Pancreas (tissue), 10 donors: ENCODE measurements at regions of chr7 and their contacts with region 1.

Region 1: GRCh38 chr7:2214636-2215035 is 18.1 kb downstream of the MAD1L1 start:
- DNase-seq: peak in 1 of 6 donors; percentile 11
- ATAC-seq: no peak
- H3K4me3 ChIP-seq: no peak overlapping the region
- H3K27ac ChIP-seq: no peak overlapping the region
- H3K4me1 ChIP-seq: no peaks in the 10 kb centered on the region
- H3K27me3 ChIP-seq: no peaks in the 10 kb centered on the region
- CTCF ChIP-seq: no peak

Region 2: DNA sequence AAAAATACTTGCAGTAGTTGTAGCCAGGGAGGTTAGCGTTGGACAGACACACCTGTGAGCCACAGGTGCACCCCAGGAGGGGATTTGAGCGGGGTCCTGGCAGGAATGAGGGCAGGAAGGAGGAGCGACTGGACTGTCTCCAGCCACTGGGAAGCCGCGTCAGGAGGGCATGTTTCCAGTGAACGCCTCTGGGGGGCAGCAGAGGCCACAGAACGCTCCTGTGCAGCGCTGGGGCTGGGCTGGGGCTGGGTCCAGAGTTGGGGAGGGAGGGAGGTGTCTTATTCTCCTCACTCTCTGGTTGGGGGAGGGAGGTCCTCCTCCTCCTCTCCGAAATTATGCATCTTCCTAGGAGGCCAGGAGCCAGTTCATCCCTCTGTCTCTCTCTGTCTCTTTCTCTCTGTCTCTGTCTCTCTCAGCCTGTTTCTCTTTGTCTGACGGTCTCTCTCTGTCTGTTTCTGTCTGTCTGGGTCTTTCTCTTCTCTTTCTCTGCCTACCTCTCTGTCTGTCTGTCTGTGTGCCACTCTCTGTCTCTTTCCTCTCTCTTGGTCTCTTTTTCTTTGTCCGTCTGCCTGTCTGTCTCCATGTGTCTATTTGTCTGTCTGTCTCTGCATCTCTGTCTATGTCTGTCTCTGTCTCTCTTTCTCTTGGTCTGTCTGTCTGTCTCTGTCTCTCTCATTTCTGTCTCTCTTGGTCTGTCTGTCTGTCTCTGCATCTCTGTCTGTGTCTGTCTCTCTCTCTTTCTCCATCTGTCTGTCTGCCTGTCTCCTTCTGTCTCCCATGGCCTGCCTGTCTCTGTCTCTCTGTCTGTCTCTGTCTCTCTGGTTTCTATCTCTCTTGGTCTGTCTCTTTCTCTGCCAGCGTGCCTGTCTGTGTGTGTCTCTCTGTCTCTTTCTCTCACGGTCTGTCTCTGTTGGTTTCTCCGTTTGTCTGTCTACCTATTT is 634.9 kb before region 1 on chr7:
- intact Hi-C with region 1: loop called in 1 of 3 experiments (anchors 10 kb)
- DNase-seq: peak in 5 of 6 donors; percentile 42 to 88 (median 74)
- ATAC-seq: peak; percentile 88 to 99 (median 96)
- H3K4me3 ChIP-seq: no peak overlapping the region
- H3K27ac ChIP-seq: no peak overlapping the region
- H3K4me1 ChIP-seq: peaks cover 0 to 3% (median 0%) of the 10 kb centered on the region in 3 donors
- H3K27me3 ChIP-seq: no peaks in the 10 kb centered on the region
- CTCF ChIP-seq: peak; percentile 57 to 75 (median 72)

Region 3: GRCh38 chr7:1664711-1665548 is 549.7 kb before region 1 on chr7:
- intact Hi-C with region 1: loop called in 1 of 3 experiments (anchors 10 kb)
- DNase-seq: peak in 5 of 6 donors; percentile 40 to 87 (median 66)
- ATAC-seq: peak; percentile 36 to 75 (median 68)
- H3K4me3 ChIP-seq: peak overlapping the region; percentile 23 to 52 (median 33)
- H3K27ac ChIP-seq: no peak overlapping the region
- H3K4me1 ChIP-seq: peaks cover 3 to 14% (median 6%) of the 10 kb centered on the region in 3 donors
- H3K27me3 ChIP-seq: peaks cover 0 to 22% (median 5%) of the 10 kb centered on the region in 4 donors
- CTCF ChIP-seq: peak; percentile 37 to 57 (median 54)